Activated CD4-positive, alpha-beta T cell treated with anti-CD3 and anti-CD28 coated beads, Interleukin-2, amount 10 ng/mL, durations not matched to agents 7 days and 5 days (primary cell): ENCODE measurements at regions of chr19 and their contacts with region 1.

Region 1: DNA sequence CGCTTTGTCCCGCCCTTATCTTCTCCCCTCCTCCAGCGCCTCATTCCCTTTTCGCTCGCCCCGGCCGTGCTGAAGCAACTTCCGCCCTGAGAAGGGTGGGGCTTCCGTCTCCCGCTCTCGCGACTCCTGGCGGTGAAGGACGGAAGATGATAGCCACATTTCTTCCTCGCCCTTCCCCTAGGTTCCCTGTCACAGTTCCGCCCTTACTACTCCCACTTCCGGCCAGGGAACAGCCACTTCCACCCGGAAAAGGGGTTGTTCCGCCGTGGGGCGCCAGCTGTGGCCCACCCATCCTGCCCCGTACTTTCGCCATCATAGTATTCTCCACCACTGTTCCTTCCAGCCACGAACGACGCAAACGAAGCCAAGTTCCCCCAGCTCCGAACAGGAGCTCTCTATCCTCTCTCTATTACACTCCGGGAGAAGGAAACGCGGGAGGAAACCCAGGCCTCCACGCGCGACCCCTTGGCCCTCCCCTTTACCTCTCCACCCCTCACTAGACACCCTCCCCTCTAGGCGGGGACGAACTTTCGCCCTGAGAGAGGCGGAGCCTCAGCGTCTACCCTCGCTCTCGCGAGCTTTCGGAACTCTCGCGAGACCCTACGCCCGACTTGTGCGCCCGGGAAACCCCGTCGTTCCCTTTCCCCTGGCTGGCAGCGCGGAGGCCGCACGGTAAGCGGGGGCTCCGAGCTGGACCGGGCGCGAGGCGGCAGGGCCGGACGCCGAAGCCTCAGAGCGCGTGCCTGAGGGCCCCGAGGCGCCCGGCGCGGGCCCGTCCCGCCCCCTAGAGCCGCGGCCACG is at the start of gene RPS19:
- DNase-seq: peak; percentile 98
- H3K4me3 Mint-ChIP-seq: peak within 1 kb of the TSS; percentile 79
- H3K27ac Mint-ChIP-seq: peak within 1 kb of the TSS; percentile 94
- H3K4me1 Mint-ChIP-seq: peaks cover 44% of the 10 kb centered on the region
- H3K27me3 Mint-ChIP-seq: peaks cover 2% of the 10 kb centered on the region
- total RNA-seq, gene RPS19: 2,679 to 3,011 TPM

Region 2: DNA sequence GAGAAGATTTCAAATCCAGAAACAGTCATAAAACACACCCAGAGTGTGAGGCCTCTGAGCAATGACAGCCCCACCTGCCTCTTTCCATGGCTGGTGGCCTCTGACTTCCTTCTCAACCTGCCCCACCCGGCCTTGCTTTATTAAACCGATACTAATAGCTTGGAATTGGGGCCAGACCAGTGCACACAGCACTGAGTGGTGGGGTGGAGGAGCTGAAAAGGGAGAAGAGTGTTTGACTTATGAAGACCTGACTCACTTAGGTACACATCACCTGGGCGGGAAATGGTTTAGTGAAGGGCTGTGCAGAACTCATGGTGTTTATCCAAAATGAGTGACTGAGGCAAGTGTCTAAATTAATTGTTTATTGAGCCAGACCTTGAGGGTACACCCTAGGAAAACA is 125.2 kb before region 1 on chr19:
- CTCF ChIA-PET with region 1: no interaction called
- POLR2A ChIA-PET with region 1: no interaction called
- DNase-seq: no peak
- H3K4me3 Mint-ChIP-seq: no peak overlapping the region
- H3K27ac Mint-ChIP-seq: no peak overlapping the region
- H3K4me1 Mint-ChIP-seq: peaks cover 4% of the 10 kb centered on the region
- H3K27me3 Mint-ChIP-seq: peaks cover 43% of the 10 kb centered on the region

Region 3: GRCh38 chr19:41883821-41884733 is 24.3 kb after region 1 on chr19:
- CTCF ChIA-PET with region 1: interaction called, 12 read pairs
- POLR2A ChIA-PET with region 1: interaction called, 5 read pairs
- DNase-seq: peak; percentile 90
- H3K4me3 Mint-ChIP-seq: peak overlapping the region; percentile 83
- H3K27ac Mint-ChIP-seq: peak overlapping the region; percentile 94
- H3K4me1 Mint-ChIP-seq: peaks cover 51% of the 10 kb centered on the region
- H3K27me3 Mint-ChIP-seq: no peaks in the 10 kb centered on the region

Region 4: GRCh38 chr19:41959056-41960053 is 99.5 kb after region 1 on chr19 and contains the start of gene RABAC1:
- CTCF ChIA-PET with region 1: interaction called, 13 read pairs
- POLR2A ChIA-PET with region 1: no interaction called
- DNase-seq: peak; percentile 93
- H3K4me3 Mint-ChIP-seq: peak within 1 kb of the TSS; percentile 86
- H3K27ac Mint-ChIP-seq: peak within 1 kb of the TSS; percentile 91
- H3K4me1 Mint-ChIP-seq: peaks cover 20% of the 10 kb centered on the region
- H3K27me3 Mint-ChIP-seq: no peaks in the 10 kb centered on the region
- total RNA-seq, gene RABAC1: 67.4 to 74.0 TPM